WTC11 (cell line): ENCODE measurements at regions of chr20 and their contacts with region 1.

Region 1: GRCh38 chr20:37992802-37993409 is 40.4 kb downstream of the TTI1 start:
- DNase-seq: no peak
- ATAC-seq: no peak; the same call in 1 of the 2 replicates
- H3K4me3 Mint-ChIP-seq: no peak overlapping the region
- H3K27ac Mint-ChIP-seq: no peak overlapping the region
- H3K4me1 Mint-ChIP-seq: peaks cover 4% of the 10 kb centered on the region; the same call in 1 of the 2 replicates
- H3K27me3 Mint-ChIP-seq: no peaks in the 10 kb centered on the region
- CTCF ChIP-seq: peak; percentile 70

Region 2: DNA sequence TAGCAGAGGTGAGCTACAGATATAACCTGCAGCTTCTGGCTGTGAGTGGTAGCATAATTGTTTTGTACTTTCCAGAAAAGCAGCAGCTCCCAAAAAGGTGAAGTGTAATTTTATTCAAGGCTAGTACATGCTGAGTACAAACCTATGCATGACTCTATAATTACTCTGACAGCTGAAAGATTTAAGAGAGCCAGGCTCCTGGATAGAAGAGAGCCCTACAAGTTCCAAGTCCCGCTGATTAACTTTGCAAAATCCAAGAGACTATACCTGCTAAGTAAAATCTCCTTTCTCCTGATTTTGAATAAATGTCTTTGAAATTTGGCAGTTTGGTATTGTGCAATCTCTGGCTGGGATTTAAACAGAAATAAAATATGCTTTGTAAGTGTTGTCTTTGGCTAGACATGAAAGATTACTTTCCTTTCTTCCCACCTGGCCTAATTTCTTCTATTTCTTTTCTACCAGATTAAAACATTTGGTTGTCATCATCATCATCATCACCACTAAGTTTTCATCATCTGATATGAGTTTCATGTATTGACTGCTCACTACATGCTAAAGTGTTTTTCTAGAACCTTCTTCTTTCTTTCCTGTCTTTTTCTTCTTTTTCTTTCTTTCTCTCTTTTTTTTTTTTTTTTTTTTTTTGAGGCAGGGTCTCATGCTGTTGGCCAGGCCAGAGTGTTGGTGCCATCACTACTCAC is 219.5 kb before region 1 on chr20:
- CTCF ChIA-PET with region 1: no interaction called
- POLR2A ChIA-PET with region 1: no interaction called
- DNase-seq: no peak
- ATAC-seq: no peak
- H3K4me3 Mint-ChIP-seq: no peak overlapping the region
- H3K27ac Mint-ChIP-seq: no peak overlapping the region
- H3K4me1 Mint-ChIP-seq: peaks cover 6% of the 10 kb centered on the region
- H3K27me3 Mint-ChIP-seq: no peaks in the 10 kb centered on the region
- CTCF ChIP-seq: no peak

Region 3: DNA sequence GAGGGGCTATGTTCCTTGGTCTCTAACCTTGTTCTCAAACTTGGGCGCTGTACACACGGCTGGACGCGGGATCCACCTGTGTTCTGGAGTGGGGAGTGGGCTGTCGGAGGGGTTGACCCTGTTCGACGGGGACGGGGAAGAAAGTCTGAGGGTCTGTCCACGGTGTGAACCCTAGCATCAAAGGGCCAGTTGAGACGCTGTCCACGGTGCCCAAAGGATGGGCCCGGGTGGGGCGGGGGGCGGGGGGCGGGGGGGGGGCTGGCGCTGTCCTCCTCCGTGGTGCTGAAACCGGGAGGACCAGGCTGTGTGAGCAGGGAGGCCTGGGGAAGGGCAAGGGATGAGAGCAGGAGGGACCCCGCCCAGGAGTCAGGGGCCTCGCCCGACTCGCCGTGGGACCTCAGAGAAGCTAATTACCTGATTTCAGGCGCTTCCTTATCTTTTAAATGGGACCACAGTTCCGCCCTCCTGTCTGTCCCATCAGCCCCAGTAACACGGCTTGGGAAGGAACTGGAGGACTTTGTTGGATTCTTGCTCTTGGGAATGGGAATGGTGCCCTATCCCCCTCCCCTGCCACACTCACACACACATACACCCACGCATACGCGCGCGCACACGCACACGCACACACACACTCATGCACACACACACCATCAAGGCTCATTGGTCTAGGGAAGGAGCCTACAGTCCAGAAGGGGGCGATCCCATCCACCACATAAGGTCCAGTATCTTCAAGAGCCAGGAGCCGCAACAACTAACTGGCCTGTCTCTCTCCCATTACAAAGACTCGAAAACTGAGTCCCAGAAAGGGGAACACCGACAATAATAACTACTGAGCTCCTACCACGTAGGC is 91.0 kb before region 1 on chr20:
- CTCF ChIA-PET with region 1: interaction called, 16 read pairs
- POLR2A ChIA-PET with region 1: no interaction called
- DNase-seq: peak; percentile 49
- ATAC-seq: peak; percentile 57
- H3K4me3 Mint-ChIP-seq: peak overlapping the region; percentile 82
- H3K27ac Mint-ChIP-seq: no peak overlapping the region
- H3K4me1 Mint-ChIP-seq: peaks cover 28% of the 10 kb centered on the region
- H3K27me3 Mint-ChIP-seq: peaks cover 26% of the 10 kb centered on the region
- CTCF ChIP-seq: peak; percentile 29; the same call in 1 of the 2 replicates

Region 4: DNA sequence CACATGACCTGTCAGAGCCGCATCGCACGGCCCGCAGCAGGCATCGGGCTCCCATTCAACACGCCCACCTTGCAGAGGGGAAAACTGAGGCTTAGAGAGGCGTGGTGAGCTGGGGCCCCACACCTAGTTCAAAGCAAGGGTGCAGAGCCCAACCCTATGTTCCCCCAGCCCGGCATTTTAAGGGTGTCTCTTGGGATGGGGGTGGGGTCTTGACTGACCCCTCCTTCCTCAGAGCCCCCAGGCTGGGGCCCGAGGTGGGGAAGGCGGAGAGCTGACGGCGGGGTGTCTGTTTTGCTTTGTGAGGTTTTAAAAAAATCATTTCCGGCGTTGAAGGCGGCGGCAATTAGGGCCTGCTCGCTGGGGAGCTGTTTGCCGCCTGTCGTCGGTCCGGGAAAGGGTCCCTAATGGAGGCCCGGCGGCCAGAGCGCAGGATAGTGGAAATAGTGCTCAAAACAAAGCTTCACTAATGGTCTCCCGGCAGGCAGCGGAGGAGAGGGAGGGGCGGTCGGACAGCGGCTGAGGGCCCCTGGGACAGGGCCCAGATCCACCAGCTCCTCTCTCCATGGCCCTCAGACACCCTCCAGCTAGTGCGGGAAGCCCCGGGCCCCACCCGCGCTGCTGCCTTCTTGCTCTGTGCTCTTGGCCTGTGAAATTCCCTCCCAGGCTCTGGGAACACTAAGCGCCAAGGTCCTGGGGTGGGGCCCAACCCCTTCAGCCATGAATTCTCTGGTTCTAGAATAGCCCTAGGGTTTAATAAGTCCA is 78.1 kb before region 1 on chr20:
- CTCF ChIA-PET with region 1: interaction called, 14 read pairs
- POLR2A ChIA-PET with region 1: no interaction called
- DNase-seq: peak; percentile 72
- ATAC-seq: peak; percentile 59
- H3K4me3 Mint-ChIP-seq: peak overlapping the region; percentile 76
- H3K27ac Mint-ChIP-seq: peak overlapping the region; percentile 87
- H3K4me1 Mint-ChIP-seq: peaks cover 67% of the 10 kb centered on the region
- H3K27me3 Mint-ChIP-seq: peaks cover 37% of the 10 kb centered on the region
- CTCF ChIP-seq: no peak

Region 5: GRCh38 chr20:37968841-37969401 is 24.0 kb before region 1 on chr20:
- CTCF ChIA-PET with region 1: interaction called, 13 read pairs
- POLR2A ChIA-PET with region 1: no interaction called
- DNase-seq: no peak
- ATAC-seq: peak; percentile 75
- H3K4me3 Mint-ChIP-seq: no peak overlapping the region
- H3K27ac Mint-ChIP-seq: peak overlapping the region; percentile 4; the same call in 1 of the 2 replicates
- H3K4me1 Mint-ChIP-seq: peaks cover 43% of the 10 kb centered on the region
- H3K27me3 Mint-ChIP-seq: peaks cover 55% of the 10 kb centered on the region
- CTCF ChIP-seq: no peak

Region 6: DNA sequence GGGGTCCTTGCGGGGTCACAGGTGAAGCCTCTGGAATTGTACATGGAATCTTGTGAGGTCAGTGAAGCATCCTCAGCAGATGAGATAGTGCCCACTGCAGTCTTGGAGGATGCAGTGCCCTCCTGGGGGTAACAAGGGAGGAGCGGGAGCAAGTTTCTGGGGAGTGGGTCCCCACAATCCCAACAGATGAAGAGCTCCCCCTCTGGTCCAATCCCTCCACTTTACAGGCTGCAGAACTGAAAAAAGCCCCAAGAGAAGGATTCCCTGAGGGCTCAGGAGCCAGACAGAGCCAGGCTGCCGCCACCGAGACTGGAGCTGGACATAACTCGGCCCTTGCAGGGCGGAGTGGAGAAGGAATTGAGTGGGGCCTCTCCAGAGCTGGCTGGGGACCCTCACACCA is 12.0 kb before region 1 on chr20:
- CTCF ChIA-PET with region 1: interaction called, 32 read pairs
- POLR2A ChIA-PET with region 1: no interaction called
- DNase-seq: no peak
- ATAC-seq: peak; percentile 62
- H3K4me3 Mint-ChIP-seq: no peak overlapping the region
- H3K27ac Mint-ChIP-seq: no peak overlapping the region
- H3K4me1 Mint-ChIP-seq: peaks cover 19% of the 10 kb centered on the region
- H3K27me3 Mint-ChIP-seq: no peaks in the 10 kb centered on the region; the same call in 1 of the 2 replicates
- CTCF ChIP-seq: no peak

Region 7: DNA sequence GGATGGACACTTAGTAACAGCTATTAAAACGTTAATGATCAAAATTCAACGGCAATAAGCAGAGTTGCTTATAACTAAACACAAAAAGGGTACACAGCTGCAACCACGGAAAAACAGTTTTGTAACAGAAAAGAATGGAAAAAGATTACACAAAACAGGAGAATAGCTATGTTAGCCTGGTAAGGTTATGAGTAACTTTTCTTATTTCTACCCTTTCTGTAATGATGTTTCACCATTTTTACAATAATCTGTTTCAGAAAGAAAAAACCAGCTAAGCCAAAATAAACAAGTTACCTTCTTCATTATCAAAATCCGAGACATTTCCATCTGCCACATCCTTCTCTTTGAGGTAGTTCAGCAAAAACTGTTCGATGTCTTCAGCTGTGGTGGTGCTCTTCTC is 13.0 kb after region 1 on chr20:
- CTCF ChIA-PET with region 1: interaction called, 10 read pairs
- POLR2A ChIA-PET with region 1: no interaction called
- DNase-seq: no peak
- ATAC-seq: no peak
- H3K4me3 Mint-ChIP-seq: no peak overlapping the region
- H3K27ac Mint-ChIP-seq: no peak overlapping the region
- H3K4me1 Mint-ChIP-seq: no peaks in the 10 kb centered on the region
- H3K27me3 Mint-ChIP-seq: no peaks in the 10 kb centered on the region
- CTCF ChIP-seq: no peak